Activated CD8-positive, alpha-beta T cell treated with anti-CD3 and anti-CD28 coated beads for 36 hours (primary cell): ENCODE measurements at regions of chr12 and their contacts with region 1.

Region 1: GRCh38 chr12:108868781-108869180 is 11.1 kb upstream of the DAO start:
- DNase-seq: no peak
- ATAC-seq: no peak
- H3K4me3 Mint-ChIP-seq: no peak overlapping the region
- H3K27ac Mint-ChIP-seq: no peak overlapping the region
- H3K4me1 Mint-ChIP-seq: no peaks in the 10 kb centered on the region
- H3K27me3 Mint-ChIP-seq: no peaks in the 10 kb centered on the region
- CTCF ChIP-seq: no peak

Region 2: DNA sequence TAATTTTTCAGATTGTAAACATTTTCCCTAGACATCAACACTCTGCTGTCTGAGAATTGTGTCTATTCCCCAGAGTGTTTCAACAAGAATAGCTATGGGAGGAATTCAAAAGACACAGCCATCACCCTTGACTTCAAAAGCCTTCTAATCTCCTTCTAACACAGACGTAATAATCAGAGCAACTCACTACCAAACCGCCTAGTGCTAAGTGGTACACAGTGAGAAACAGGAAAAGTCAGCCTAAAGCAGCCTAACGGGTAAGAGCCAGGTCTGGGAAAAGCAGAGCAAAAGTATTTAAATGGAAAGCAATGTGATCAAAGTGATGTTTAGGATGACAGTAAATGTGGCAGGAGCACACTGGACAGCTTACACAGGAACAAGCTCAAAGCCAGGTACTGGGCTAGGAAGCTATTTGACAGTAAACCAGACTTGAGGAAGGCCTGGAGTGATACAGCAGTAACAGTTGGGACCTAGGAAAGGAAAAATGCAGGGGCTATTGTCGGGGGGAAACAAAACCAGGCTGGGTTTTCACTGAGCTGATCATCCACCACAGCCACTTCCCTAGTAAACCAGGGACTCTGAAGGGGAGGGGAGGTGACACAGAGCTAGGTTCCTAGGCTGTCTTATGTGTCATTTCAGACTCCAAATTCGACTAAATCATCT is 166.9 kb before region 1 on chr12:
- CTCF ChIA-PET with region 1: no interaction called
- POLR2A ChIA-PET with region 1: no interaction called
- intact Hi-C with region 1: no loop called
- DNase-seq: peak; percentile 31
- ATAC-seq: peak; percentile 82
- H3K4me3 Mint-ChIP-seq: no peak overlapping the region
- H3K27ac Mint-ChIP-seq: no peak overlapping the region
- H3K4me1 Mint-ChIP-seq: peaks cover 17% of the 10 kb centered on the region
- H3K27me3 Mint-ChIP-seq: no peaks in the 10 kb centered on the region
- CTCF ChIP-seq: no peak

Region 3: GRCh38 chr12:108884116-108885012 is 15.6 kb after region 1 on chr12:
- CTCF ChIA-PET with region 1: interaction called, 14 read pairs
- POLR2A ChIA-PET with region 1: interaction called, 3 read pairs
- intact Hi-C with region 1: no loop called
- DNase-seq: peak; percentile 89
- ATAC-seq: peak; percentile 83
- H3K4me3 Mint-ChIP-seq: no peak overlapping the region
- H3K27ac Mint-ChIP-seq: no peak overlapping the region
- H3K4me1 Mint-ChIP-seq: no peaks in the 10 kb centered on the region
- H3K27me3 Mint-ChIP-seq: no peaks in the 10 kb centered on the region
- CTCF ChIP-seq: peak; percentile 70